Heart left ventricle (tissue), 16 donors: ENCODE measurements at regions of chr3 and their contacts with region 1.

Region 1: DNA sequence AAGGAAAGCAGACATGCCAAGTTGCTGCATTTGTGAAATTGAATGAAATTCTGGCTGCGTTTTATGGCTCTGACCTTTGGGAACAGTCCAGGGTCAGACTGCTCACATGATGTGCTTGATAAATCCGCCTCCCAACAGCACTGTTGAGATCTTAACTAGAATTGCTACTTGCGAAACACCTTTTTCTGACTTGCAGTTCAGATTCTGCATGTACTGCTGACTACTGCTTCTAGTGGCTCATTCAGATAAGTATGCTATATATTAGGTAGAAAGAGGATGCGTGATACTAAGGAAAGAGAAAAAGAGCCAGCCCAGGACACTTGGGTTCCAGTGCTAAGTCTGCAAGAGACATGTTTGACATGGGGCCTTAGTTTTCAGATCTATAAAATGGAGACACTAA is 129.4 kb downstream of the LPP start:
- DNase-seq: no peak
- ATAC-seq: peak in 1 of 4 donors; percentile 14
- H3K4me3 ChIP-seq: no peak overlapping the region
- H3K27ac ChIP-seq: peak overlapping the region in 10 of 12 donors; percentile 14 to 80 (median 49)
- H3K4me1 ChIP-seq: peaks cover 0 to 86% (median 71%) of the 10 kb centered on the region in 12 donors
- H3K27me3 ChIP-seq: no peaks in the 10 kb centered on the region
- CTCF ChIP-seq: no peak
- POLR2A ChIP-seq: no peak

Region 2: DNA sequence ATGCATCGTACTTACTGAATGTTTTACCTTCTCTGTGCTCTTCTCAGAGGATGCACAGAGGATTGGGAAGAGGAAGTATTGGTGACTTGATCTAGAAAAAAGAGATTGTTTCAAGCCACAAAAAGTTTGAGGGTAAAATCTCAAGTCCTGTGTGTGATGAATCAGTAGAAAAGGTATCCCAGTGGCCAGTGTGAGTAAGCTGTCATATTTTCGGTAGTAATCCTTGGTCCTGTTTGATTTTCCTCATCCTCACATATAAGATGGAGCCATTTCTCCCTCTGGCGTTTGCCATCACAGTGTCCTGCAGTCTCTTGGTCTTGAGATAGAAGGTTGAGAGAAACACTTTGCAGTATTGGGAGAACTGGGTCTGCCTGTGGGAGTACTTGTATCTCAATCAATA is 37.4 kb after region 1 on chr3:
- intact Hi-C with region 1: loop called in 1 of 10 experiments (anchors 5 kb)
- DNase-seq: no peak
- ATAC-seq: no peak
- H3K4me3 ChIP-seq: no peak overlapping the region
- H3K27ac ChIP-seq: no peak overlapping the region
- H3K4me1 ChIP-seq: peaks cover 0 to 59% (median 28%) of the 10 kb centered on the region in 12 donors
- H3K27me3 ChIP-seq: no peaks in the 10 kb centered on the region
- CTCF ChIP-seq: no peak
- POLR2A ChIP-seq: no peak

Region 3: DNA sequence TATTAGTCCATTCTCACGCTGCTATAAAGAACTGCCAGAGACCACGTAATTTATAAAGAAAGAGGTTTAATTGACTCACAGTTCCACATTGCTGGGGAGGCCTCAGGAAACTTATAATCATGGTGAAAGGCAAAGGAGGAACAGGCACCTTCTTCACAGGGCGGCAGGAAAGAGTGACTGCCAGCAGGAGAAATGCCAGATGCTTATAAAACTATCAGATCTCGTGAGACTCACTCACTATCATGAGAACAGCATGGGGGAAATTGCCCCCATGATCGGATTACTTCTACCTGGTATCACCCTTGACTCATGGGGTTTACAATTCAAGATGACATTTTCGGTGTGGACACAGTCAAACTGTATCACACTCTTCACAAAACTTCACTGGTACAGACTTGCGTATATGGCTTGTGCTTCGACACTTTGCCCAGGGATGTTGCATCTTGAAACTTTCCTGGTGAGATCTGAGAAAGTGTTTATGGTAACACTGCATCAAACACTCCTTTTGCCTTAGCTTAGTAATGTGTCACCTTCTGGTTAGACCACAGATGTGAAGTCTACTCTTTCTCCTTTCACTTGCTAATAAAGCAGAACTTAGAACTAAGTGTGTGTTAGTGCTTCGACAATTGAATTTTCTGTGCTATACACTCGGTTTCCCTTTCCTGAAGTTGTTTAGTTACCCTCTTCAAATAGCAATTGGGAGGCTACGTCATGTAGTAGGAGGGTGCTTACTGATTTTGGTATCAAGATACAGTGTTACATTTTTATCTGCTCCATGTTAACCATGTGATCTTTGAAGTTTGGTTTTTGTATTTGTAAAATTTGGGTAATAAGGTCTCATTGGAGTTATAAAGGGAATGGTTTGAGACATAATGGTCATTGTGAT is 56.3 kb after region 1 on chr3:
- intact Hi-C with region 1: no loop called
- DNase-seq: no peak
- ATAC-seq: no peak
- H3K4me3 ChIP-seq: no peak overlapping the region
- H3K27ac ChIP-seq: peak overlapping the region in 9 of 12 donors; percentile 2 to 55 (median 18)
- H3K4me1 ChIP-seq: peaks cover 0 to 45% (median 20%) of the 10 kb centered on the region in 12 donors
- H3K27me3 ChIP-seq: no peaks in the 10 kb centered on the region
- CTCF ChIP-seq: no peak
- POLR2A ChIP-seq: no peak